ENCODE measurements at regions of chr12 and their contacts with region 1.

Region 1: DNA sequence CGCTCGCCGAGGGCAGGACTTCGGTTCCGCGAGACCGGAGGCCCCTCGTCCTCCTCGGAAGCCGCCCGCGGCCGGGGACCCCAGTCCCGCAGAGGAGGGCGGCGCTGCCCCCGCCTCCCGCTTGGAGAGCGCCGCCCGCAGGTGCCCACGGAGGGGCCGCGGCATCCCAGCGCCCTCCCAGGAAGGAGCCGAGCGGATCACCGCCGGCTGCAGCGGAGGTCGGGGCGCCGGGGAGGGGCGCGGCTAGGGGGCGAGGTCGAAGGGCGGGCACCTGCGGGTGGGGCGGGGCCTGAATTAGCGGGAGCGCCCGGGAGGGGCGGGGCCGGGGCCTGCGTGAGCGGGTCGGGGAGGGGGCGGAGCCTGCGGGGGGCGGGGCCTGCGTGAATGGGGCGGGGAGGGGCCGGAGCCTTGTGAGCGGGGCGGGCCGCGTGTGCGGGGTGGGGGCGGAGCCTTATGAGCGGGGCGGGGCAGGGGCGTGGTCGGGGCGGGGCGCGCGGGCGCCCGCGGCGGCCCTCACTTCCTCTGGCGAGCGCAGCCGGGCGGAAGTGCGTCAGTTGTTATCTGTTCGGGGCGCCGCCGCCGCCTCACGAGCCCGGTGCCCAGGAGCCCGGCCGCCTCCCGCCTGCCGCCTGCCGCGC is at the start of gene FBRSL1:
- DNase-seq: peak; percentile 94
- ATAC-seq: peak; percentile 59
- H3K4me3 Mint-ChIP-seq: peak within 1 kb of the TSS; percentile 90
- H3K27ac Mint-ChIP-seq: peak within 1 kb of the TSS; percentile 96
- H3K4me1 Mint-ChIP-seq: peaks cover 33% of the 10 kb centered on the region
- H3K27me3 Mint-ChIP-seq: no peaks in the 10 kb centered on the region
- total RNA-seq, gene FBRSL1: 67.1 to 67.2 TPM

Region 2: DNA sequence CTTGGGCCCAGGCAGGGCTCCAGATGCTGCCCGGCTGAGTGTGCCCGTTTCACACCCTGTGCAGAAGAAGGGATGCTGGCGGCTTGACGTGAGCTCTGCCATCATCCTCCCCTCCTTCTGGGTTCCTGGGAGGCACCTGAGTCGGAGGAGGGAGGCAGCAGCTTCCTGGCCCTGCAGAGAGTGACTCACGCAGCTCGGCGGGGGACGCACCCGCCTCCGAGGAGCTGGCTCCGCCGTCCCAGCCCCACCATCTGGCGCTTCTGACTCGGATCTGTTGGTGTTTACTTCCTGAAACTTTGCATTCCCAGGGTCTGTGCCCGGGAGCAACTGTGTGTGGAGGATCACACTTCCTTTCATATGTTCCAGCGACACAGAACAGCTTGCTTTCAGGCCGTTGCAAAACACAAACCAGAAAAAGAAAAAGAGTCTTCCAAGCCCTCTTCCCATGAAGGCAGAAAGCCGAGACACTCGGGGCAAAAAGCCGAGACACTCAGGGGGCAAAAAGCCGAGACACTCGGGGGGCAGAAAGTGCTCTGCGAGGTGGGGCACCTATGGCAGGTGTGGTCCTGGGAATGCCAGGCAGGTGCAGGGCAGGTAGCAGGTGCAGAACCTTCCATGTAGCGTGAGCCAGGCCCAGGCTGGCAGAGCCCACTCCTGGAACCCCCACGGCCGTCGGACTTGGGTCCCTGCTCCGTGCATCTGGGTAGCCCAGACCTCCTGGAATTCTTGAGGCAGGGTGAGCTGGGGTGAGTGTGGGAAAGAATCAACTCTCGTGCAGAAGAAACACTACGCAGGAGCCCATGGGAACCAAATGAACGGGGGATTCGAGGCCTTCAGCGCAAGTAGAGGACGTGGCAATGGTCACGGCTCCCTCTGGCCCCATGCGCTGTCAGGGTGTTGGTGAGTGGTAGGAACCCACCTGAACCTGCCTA is 132.8 kb before region 1 on chr12:
- POLR2A ChIA-PET with region 1: no interaction called
- DNase-seq: no peak
- ATAC-seq: no peak
- H3K4me3 Mint-ChIP-seq: no peak overlapping the region
- H3K27ac Mint-ChIP-seq: no peak overlapping the region
- H3K4me1 Mint-ChIP-seq: no peaks in the 10 kb centered on the region
- H3K27me3 Mint-ChIP-seq: no peaks in the 10 kb centered on the region

Region 3: DNA sequence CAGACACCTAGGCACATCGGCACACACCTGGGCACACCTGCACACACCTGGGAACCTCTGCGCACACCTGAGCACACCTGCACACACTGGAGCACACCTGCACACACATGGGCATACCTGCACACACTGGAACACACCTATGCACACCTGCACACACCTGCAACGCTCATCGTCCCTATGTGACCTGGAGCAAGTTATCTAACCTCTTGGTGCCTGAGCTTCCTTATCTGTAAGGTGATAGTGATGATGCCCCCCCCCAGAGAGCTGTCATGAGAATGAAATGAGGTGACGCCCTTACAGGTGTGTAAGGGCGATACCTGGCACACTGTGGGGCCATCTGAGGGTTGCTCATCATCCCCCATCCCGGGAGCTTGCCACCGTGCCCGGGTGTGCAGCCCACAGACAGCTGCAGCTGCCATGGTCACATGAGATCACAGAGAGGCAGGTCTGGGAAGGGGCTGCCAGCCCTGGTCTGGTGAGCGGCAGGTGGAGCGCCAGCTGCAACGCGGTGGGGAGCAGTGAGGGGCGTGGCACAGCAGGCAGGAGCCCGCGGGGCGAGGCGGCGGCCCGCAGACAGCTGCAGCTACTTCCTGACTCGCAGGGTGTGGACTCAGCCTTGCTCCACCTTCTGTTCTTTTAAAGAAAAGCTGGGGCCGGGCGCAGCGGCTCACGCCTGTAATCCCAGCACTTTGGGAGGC is 59.6 kb before region 1 on chr12:
- POLR2A ChIA-PET with region 1: interaction called, 13 read pairs
- DNase-seq: peak; percentile 77
- ATAC-seq: peak; percentile 96
- H3K4me3 Mint-ChIP-seq: peak overlapping the region; percentile 70
- H3K27ac Mint-ChIP-seq: peak overlapping the region; percentile 68
- H3K4me1 Mint-ChIP-seq: peaks cover 14% of the 10 kb centered on the region
- H3K27me3 Mint-ChIP-seq: no peaks in the 10 kb centered on the region

Region 4: GRCh38 chr12:132447731-132448462 is 41.8 kb before region 1 on chr12:
- POLR2A ChIA-PET with region 1: interaction called, 12 read pairs
- DNase-seq: no peak
- ATAC-seq: no peak
- H3K4me3 Mint-ChIP-seq: no peak overlapping the region
- H3K27ac Mint-ChIP-seq: peak overlapping the region; percentile 38
- H3K4me1 Mint-ChIP-seq: peaks cover 31% of the 10 kb centered on the region
- H3K27me3 Mint-ChIP-seq: no peaks in the 10 kb centered on the region

Region 5: GRCh38 chr12:132475304-132476037 is 14.2 kb before region 1 on chr12:
- POLR2A ChIA-PET with region 1: interaction called, 48 read pairs
- DNase-seq: peak; percentile 62
- ATAC-seq: peak; percentile 57
- H3K4me3 Mint-ChIP-seq: peak overlapping the region; percentile 71
- H3K27ac Mint-ChIP-seq: peak overlapping the region; percentile 85
- H3K4me1 Mint-ChIP-seq: peaks cover 25% of the 10 kb centered on the region
- H3K27me3 Mint-ChIP-seq: peaks cover 2% of the 10 kb centered on the region

Region 6: GRCh38 chr12:132513070-132513398 is 23.3 kb after region 1 on chr12:
- POLR2A ChIA-PET with region 1: no interaction called
- DNase-seq: no peak
- ATAC-seq: no peak
- H3K4me3 Mint-ChIP-seq: no peak overlapping the region
- H3K27ac Mint-ChIP-seq: peak overlapping the region; percentile 16
- H3K4me1 Mint-ChIP-seq: peaks cover 2% of the 10 kb centered on the region
- H3K27me3 Mint-ChIP-seq: peaks cover 3% of the 10 kb centered on the region